ENCODE measurements at regions of chr2 and their contacts with region 1.

Region 1: DNA sequence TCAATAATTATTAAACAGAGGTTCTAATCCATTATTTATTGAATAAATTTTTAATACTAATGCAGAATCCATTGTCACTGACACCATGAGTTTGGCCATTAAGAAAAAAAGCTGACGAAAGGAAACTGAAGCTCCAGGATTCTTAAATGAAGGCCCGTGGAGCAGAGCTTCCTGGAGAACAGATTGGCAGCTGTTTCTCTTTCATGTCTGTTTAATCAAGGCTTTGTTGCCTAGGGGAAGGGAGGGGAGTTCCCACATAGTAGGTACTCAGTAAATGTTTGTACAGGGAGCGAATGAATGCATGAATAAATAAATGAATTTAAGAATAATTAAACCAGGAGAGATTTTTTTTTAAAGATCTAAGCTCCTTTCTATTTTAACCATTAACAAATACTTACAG is 315.1 kb upstream of the KLHL29 start:
- DNase-seq: no peak
- ATAC-seq: no peak
- H3K4me3 ChIP-seq: no peak overlapping the region
- H3K27ac ChIP-seq: no peak overlapping the region
- H3K4me1 ChIP-seq: no peaks in the 10 kb centered on the region
- H3K27me3 ChIP-seq: no peaks in the 10 kb centered on the region

Region 2: DNA sequence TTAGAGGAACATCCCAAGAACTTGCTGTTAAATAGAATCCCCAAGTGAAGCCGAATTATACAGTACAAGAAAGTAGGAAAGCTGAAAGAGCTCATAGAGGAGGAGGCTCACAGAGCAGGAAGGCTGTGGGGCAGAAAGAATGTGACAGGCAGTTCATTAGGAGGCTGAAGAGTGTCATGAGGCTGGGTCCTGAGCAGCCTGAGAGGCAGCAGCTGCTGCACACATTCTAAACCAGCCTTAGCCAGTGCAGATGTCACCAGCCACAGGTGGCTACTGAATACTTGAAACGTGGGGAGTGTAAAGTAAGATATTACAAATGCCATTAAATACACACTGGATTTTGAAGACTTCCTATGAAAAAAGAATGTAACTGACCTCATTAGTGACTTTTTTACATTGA is 175.2 kb before region 1 on chr2:
- intact Hi-C with region 1: loop called in 1 of 4 experiments (anchors 10 kb)
- DNase-seq: no peak
- ATAC-seq: no peak
- H3K4me3 ChIP-seq: no peak overlapping the region
- H3K27ac ChIP-seq: no peak overlapping the region
- H3K4me1 ChIP-seq: no peaks in the 10 kb centered on the region
- H3K27me3 ChIP-seq: no peaks in the 10 kb centered on the region

Measured in right cardiac atrium (tissue), 5 donors.